ENCODE measurements at regions of chr10 and their contacts with region 1.

Region 1: DNA sequence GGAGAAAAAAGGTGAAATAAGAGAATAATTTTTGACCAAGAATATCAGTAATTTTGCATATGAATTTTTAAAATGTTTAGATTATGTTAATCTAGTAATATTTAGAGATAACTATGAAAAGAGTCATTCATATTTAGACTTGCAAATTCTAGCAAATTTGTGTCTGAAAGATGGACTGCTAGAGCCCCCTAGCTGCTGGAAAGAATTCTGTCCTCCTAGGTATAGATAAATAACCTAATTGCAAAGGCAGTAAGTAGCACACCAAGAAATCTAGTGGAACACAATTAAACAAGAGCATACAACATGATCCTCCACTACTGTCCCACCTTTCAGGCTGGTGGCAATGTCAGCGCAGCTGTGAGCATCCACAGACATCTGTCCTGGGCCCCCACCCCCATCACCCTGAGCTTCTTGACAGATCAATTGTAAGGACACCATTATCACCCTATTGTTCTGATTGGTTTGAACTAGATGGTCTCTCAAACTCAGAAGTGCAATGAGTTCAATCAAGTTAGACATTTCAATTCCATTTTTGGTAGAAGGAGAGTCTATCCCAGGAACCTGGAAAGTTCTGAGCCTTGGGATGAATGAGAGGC is 15.0 kb upstream of the GFRA1 start:
- DNase-seq: peak; percentile 60
- H3K4me3 ChIP-seq: no peak overlapping the region; a peak in 1 of 4 replicates
- H3K27ac ChIP-seq: no peak overlapping the region
- H3K4me1 ChIP-seq: no peaks in the 10 kb centered on the region
- H3K27me3 ChIP-seq: no peaks in the 10 kb centered on the region
- CTCF ChIP-seq: peak; percentile 81
- EP300 ChIP-seq: no peak
- RAD21 ChIP-seq: peak; percentile 94

Region 2: GRCh38 chr10:115432188-115432775 is 855.7 kb before region 1 on chr10:
- CTCF ChIA-PET with region 1: interaction called, 27 read pairs
- POLR2A ChIA-PET with region 1: no interaction called
- DNase-seq: peak; percentile 12
- H3K4me3 ChIP-seq: no peak overlapping the region
- H3K27ac ChIP-seq: no peak overlapping the region
- H3K4me1 ChIP-seq: no peaks in the 10 kb centered on the region
- H3K27me3 ChIP-seq: no peaks in the 10 kb centered on the region
- CTCF ChIP-seq: peak; percentile 51
- EP300 ChIP-seq: no peak
- RAD21 ChIP-seq: peak; percentile 75

Region 3: DNA sequence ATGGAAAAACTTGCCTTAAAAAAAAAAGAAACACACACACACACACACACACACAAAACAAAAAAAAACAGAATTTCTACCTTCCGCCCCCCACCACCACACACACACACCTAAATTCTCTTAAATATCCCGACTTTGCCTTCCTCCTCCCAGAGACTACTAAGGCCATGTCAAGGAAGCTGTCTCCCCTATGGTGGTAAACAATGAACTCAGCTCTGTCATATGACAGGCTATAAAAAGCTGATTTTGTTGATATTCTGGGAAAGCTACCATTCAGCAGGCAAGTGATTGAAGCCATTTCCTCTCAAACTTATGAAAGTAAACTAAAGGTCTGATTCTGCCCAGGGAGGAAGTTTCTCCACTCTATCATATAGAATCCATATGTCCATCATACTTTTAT is 486.0 kb before region 1 on chr10:
- CTCF ChIA-PET with region 1: interaction called, 24 read pairs
- POLR2A ChIA-PET with region 1: no interaction called
- DNase-seq: no peak
- H3K4me3 ChIP-seq: no peak overlapping the region
- H3K27ac ChIP-seq: no peak overlapping the region
- H3K4me1 ChIP-seq: no peaks in the 10 kb centered on the region
- H3K27me3 ChIP-seq: no peaks in the 10 kb centered on the region
- CTCF ChIP-seq: no peak
- EP300 ChIP-seq: no peak
- RAD21 ChIP-seq: no peak

Region 4: DNA sequence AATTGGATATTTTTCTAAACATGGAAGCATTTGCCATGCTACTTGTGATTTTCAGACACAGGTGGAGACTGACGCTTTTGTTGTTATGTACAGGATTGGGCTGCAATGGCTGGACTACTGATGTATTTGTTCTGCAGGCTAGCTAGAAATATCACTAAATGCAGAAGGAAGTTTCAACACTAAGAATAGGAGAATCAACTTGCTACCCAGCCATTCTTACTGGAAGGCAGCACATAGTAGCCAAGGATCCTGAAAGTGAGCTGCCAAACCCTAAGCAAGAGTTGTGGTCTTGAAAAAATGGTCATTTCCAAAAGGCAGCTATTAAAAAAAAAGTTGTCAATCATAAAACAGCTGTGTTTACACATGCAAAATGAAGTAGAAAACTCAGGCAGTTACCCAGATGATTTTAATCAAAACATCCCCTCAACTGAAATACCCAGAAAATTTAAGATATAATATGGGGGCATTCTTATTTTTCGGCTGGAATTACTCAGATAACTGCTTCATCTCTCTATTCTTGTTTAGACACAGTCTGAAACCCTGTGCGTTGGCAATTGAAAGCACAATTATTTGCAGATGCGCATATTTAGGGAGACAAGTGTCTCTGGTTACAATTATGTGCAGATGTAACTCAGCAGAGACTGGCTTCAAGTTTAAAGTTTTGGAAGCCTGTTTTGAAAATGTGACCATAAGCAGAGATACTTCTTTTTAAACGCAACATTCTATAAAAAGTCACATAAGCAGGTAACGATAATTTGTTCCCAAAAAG is 46.2 kb before region 1 on chr10:
- CTCF ChIA-PET with region 1: no interaction called
- POLR2A ChIA-PET with region 1: no interaction called
- DNase-seq: peak; percentile 9
- H3K4me3 ChIP-seq: no peak overlapping the region
- H3K27ac ChIP-seq: no peak overlapping the region
- H3K4me1 ChIP-seq: no peaks in the 10 kb centered on the region; a peak in 1 of 4 replicates
- H3K27me3 ChIP-seq: no peaks in the 10 kb centered on the region
- CTCF ChIP-seq: no peak
- EP300 ChIP-seq: no peak
- RAD21 ChIP-seq: no peak

Region 5: DNA sequence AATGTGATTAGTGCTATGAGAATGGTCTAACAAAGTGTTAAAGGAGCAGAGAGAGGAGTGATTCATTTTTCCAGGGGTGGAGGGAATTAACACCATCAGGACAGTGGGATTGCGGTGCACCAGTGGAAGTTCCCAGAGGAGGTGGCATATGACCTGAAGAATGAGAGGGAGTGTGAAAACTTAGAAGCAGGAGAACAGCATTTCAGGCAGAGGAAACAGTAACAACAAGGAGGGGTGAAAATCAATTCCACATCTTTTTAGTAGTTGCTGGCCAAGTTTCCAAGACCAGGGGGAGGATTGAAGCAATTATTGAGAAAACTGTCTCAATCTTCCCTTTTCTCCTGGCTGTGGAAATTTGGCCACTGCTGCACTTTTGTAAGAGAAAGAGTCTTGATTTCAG is 12.5 kb after region 1 on chr10:
- CTCF ChIA-PET with region 1: interaction called, 27 read pairs
- POLR2A ChIA-PET with region 1: no interaction called
- DNase-seq: no peak
- H3K4me3 ChIP-seq: no peak overlapping the region
- H3K27ac ChIP-seq: no peak overlapping the region
- H3K4me1 ChIP-seq: no peaks in the 10 kb centered on the region
- H3K27me3 ChIP-seq: no peaks in the 10 kb centered on the region
- CTCF ChIP-seq: no peak
- EP300 ChIP-seq: no peak
- RAD21 ChIP-seq: no peak